ENCODE measurements at regions of chr5 and their contacts with region 1.

Region 1: DNA sequence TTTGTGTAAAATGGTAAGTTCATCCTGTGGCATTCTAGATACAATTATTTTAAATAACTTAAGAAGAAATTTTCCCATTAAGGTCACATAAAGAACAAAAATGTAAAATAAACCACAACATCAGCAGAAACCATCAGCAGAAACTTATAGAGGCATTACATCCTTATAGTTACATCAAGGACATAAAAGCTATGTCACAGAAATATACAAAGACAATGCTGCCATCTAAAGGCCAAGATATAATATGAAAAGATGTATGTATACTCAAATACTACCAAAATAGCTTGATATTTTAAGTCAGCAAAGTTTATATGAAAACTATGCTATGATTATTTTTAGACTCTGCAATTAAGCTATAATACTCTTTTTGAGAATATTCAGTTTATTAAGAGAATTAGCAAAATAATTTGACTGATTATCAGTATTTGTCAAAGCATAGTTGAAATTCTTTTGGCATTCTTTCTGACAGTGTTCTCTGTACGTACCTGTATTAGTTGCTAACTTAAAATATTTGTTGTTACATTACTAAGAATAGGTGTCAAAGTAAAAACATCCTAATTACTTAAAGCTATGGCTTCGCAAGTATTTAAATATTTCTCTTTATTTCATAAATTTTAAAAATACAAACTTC is 36.2 kb downstream of the FBXL17 start:
- DNase-seq: peak in 3 of 14 experiments; percentile 56 to 61 (median 61)
- ATAC-seq: peak; percentile 60
- H3K4me3 ChIP-seq: no peak overlapping the region
- H3K4me3 Mint-ChIP-seq: no peak overlapping the region
- H3K27ac ChIP-seq: no peak overlapping the region
- H3K27ac Mint-ChIP-seq: no peak overlapping the region
- H3K4me1 ChIP-seq: no peaks in the 10 kb centered on the region
- H3K4me1 Mint-ChIP-seq: no peaks in the 10 kb centered on the region
- H3K27me3 ChIP-seq: no peaks in the 10 kb centered on the region
- H3K27me3 Mint-ChIP-seq: no peaks in the 10 kb centered on the region
- CTCF ChIP-seq: peak; percentile 74

Region 2: GRCh38 chr5:107571621-107572536 is 773.8 kb before region 1 on chr5:
- CTCF ChIA-PET with region 1: no interaction called
- POLR2A ChIA-PET with region 1: no interaction called
- intact Hi-C with region 1: loop called in 1 of 2 experiments (anchors 10 kb)
- DNase-seq: peak; percentile 67 to 88 (median 81)
- ATAC-seq: peak; percentile 89
- H3K4me3 ChIP-seq: peak overlapping the region; percentile 63
- H3K4me3 Mint-ChIP-seq: peak overlapping the region; percentile 87
- H3K27ac ChIP-seq: no peak overlapping the region
- H3K27ac Mint-ChIP-seq: no peak overlapping the region
- H3K4me1 ChIP-seq: peaks cover 16% of the 10 kb centered on the region
- H3K4me1 Mint-ChIP-seq: peaks cover 16% of the 10 kb centered on the region
- H3K27me3 ChIP-seq: no peaks in the 10 kb centered on the region
- H3K27me3 Mint-ChIP-seq: peaks cover 24% of the 10 kb centered on the region
- CTCF ChIP-seq: peak; percentile 98

Region 3: DNA sequence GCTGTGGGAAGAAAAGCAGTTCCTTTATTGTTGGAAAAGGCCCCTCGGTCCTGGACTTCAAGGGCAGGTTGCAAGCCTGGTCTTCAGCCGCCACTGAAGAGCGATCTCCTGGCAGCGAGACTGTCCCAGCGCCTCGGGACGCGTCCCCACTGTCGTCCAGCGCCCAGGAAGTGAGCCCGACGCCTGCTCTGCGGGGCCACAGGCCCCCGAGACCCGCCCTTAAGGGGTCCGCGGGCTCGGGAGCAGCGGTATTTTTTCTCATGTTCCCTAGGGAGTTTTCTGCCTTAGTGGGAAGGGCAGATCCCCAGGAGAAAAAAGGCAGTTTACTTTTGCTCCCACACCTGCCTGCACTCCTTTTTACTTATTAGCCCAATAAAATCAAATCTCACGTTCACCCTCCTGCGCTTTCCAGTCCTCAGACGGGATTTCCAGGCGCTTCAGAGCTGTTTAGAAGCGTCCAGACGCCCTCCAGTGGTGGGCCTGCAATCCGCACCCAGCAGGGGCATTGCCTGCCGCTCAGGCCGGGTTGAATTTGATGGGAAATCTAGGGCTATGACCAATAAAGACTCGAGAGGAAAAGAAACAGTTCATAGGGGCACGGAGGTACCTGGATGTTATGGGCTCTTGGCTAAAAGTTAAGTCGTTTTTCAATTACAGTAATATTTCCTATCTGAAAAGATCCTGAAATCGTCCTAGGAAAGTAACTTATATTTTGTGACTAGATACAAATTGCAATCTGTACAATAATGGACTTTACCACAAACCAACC is 672.1 kb before region 1 on chr5:
- CTCF ChIA-PET with region 1: no interaction called
- POLR2A ChIA-PET with region 1: no interaction called
- intact Hi-C with region 1: loop called in 1 of 2 experiments (anchors 10 kb)
- DNase-seq: peak; percentile 32 to 75 (median 51)
- ATAC-seq: peak; percentile 84
- H3K4me3 ChIP-seq: peak overlapping the region; percentile 42
- H3K4me3 Mint-ChIP-seq: peak overlapping the region; percentile 86
- H3K27ac ChIP-seq: no peak overlapping the region
- H3K27ac Mint-ChIP-seq: no peak overlapping the region
- H3K4me1 ChIP-seq: peaks cover 41% of the 10 kb centered on the region
- H3K4me1 Mint-ChIP-seq: peaks cover 25% of the 10 kb centered on the region
- H3K27me3 ChIP-seq: peaks cover 50 to 63% of the 10 kb centered on the region in 2 experiments
- H3K27me3 Mint-ChIP-seq: peaks cover 83% of the 10 kb centered on the region
- CTCF ChIP-seq: peak; percentile 72

Region 4: GRCh38 chr5:108260117-108260857 is 85.4 kb before region 1 on chr5:
- CTCF ChIA-PET with region 1: interaction called, 7 read pairs
- POLR2A ChIA-PET with region 1: interaction called, 5 read pairs
- intact Hi-C with region 1: loop called (anchors 1 to 2 kb)
- DNase-seq: peak; percentile 43 to 82 (median 50)
- ATAC-seq: peak; percentile 77
- H3K4me3 ChIP-seq: no peak overlapping the region
- H3K4me3 Mint-ChIP-seq: no peak overlapping the region
- H3K27ac ChIP-seq: no peak overlapping the region
- H3K27ac Mint-ChIP-seq: no peak overlapping the region
- H3K4me1 ChIP-seq: no peaks in the 10 kb centered on the region
- H3K4me1 Mint-ChIP-seq: peaks cover 20% of the 10 kb centered on the region
- H3K27me3 ChIP-seq: no peaks in the 10 kb centered on the region
- H3K27me3 Mint-ChIP-seq: no peaks in the 10 kb centered on the region
- CTCF ChIP-seq: peak; percentile 97

Region 5: DNA sequence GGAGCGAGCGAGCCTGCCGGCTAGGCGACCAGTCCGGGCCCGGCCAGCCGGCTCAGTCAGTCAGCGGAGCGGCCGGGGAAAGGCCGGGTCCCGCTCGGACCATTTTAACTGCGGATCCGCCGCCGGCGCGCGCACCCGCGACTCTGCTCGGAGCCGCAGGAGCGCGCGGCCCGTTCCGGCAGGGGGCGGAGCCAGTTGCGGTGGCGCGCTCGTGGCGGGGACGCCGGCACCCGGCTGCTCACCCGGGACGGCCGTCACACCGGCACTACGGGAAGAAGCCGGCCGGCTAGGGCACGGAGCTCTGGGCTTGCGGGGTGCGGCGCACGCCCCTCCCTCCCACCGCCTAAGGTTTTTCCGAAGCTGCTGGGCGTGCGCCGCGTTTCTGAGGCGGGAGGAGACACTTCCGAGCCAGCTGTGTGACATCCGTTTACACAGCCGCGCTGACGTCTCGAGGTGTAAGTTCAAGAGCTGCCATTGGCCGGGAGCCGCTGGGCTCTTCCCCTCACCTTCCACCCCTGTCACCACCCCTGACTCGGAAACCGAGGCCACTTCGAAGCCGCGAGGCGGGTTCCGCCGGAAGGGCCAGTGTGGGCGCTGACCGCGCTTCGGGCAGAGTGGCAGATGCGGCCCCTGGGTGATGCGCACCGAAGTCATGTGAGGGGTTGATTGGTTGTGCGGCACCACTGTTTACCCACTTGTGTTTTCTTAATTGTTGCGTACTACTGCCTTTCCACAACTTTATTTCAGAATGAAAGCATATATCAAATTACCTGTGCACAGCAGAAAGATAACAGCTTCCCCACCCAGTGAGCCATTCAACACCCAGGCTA is 36.5 kb after region 1 on chr5 and contains the start of gene FBXL17:
- CTCF ChIA-PET with region 1: no interaction called
- POLR2A ChIA-PET with region 1: interaction called, 13 read pairs
- intact Hi-C with region 1: no loop called
- DNase-seq: peak; percentile 83 to 97 (median 87)
- ATAC-seq: peak; percentile 76
- H3K4me3 ChIP-seq: peak within 1 kb of the TSS; percentile 63
- H3K4me3 Mint-ChIP-seq: peak within 1 kb of the TSS; percentile 90
- H3K27ac ChIP-seq: peak within 1 kb of the TSS; percentile 88 to 98
- H3K27ac Mint-ChIP-seq: peak within 1 kb of the TSS; percentile 94
- H3K4me1 ChIP-seq: peaks cover 13% of the 10 kb centered on the region
- H3K4me1 Mint-ChIP-seq: peaks cover 47% of the 10 kb centered on the region
- H3K27me3 ChIP-seq: no peaks in the 10 kb centered on the region
- H3K27me3 Mint-ChIP-seq: no peaks in the 10 kb centered on the region
- CTCF ChIP-seq: no peak
- total RNA-seq, gene FBXL17: 17.9 to 21.1 TPM

Measured in CD4-positive, alpha-beta T cell (primary cell).